Breast epithelium (tissue), 4 donors: ENCODE measurements at regions of chr20 and their contacts with region 1.

Region 1: DNA sequence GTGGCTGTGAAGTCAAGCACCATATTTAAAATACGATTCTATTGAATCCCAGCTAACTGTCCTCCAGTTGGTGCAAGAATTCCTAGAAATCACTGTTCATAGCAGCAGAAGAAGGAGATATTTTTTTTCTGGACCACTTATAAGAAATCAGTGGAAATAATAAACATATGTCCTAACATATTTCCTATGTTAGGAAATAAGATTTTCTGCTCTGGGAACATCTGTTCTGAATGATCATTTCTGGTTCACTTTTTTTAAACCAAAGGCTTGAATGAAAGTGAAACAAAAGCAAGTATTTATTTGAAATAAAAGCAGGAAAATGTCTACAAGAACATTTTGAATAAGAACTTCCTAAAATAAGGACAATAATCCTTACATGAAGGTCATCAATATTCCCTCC is 138.9 kb upstream of the RALGAPA2 start:
- DNase-seq: no peak
- H3K4me3 ChIP-seq: no peak overlapping the region
- H3K27ac ChIP-seq: no peak overlapping the region
- H3K4me1 ChIP-seq: no peaks in the 10 kb centered on the region
- H3K27me3 ChIP-seq: no peaks in the 10 kb centered on the region
- CTCF ChIP-seq: no peak
- POLR2A ChIP-seq: no peak

Region 2: GRCh38 chr20:20229595-20229994 is 621.8 kb before region 1 on chr20:
- intact Hi-C with region 1: loop called (anchors 5 kb)
- DNase-seq: no peak
- H3K4me3 ChIP-seq: no peak overlapping the region
- H3K27ac ChIP-seq: no peak overlapping the region
- H3K4me1 ChIP-seq: no peaks in the 10 kb centered on the region
- H3K27me3 ChIP-seq: no peaks in the 10 kb centered on the region
- CTCF ChIP-seq: no peak
- POLR2A ChIP-seq: no peak

Region 3: DNA sequence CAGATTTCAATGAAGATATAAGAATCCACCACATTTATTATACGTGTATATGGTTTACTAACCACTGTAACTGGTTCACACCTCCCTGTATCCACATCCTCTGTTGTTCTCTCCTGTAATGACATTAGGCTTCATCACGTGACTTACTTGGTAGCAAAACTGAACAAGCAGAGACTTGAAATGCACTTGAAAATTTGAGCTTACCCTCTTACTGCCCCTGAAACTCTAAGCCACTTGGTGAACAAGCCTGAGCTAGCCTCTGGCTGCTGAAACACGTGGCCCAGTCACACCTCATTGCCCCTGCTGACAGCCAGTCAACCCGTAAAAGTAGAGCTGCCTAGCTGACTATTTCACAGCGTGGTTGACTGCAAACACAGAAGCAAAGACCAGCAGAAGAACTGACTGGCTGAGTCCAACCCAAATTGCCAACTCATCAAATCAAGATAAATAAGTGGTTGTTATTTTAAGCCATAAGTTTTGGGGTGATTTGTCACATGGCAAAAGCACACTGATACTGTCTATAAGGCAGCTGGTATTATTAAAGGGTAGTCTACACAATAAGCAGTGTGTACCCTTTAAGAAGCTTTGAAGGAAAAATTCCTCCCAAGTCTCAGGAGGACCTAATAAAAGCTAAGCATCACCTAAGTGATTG is 247.9 kb before region 1 on chr20:
- intact Hi-C with region 1: no loop called
- DNase-seq: no peak
- H3K4me3 ChIP-seq: no peak overlapping the region
- H3K27ac ChIP-seq: no peak overlapping the region
- H3K4me1 ChIP-seq: no peaks in the 10 kb centered on the region
- H3K27me3 ChIP-seq: no peaks in the 10 kb centered on the region
- CTCF ChIP-seq: no peak
- POLR2A ChIP-seq: no peak